ENCODE measurements at regions of chr3 and their contacts with region 1.

Region 1: DNA sequence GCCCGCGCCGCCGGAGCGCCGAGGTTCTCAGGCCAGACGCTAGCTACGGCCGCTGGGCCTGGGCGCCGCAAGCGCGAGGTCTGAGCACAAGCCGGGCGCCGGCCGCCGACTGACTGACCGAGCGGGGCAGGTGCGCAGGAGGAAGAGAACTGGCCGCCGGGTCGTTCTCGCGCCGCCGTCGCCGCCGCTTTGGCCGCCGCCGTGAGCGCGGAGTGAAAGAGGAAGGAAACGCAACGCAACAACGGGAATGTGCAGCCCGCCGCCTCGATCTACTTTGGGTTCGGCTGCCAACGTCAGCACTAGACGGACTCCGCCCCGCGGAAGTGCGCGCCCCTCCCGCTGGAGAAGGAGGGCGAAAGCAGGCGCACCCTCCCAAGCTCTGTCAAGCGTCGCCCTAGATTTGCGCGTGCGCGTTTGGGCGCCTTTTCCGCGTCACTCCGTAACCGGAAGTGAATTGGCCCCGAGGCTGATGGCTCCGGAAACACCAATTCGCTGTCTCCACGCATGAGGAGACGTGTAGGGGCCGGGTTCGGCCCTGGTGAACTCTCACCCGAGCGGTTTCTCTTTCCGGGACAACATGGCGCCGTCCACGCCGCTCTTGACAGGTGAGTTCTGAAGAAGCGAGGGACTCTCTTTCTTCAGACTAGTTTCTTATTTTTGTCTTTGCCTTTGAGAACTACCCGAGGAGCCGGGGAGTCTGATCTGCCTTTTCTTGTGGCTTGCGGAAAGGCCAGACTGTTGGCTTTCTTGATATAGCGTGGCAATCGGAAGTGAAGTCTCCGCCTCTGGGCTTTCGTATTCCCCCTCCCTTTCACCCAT is at the starts of genes EIF2A and SERP1:
- DNase-seq: peak; percentile 97 to 100 (median 100)
- ATAC-seq: peak; percentile 94
- H3K4me3 ChIP-seq: peak within 1 kb of the TSS; percentile 78
- H3K4me3 Mint-ChIP-seq: peak within 1 kb of the TSS; percentile 88 to 99 (median 96)
- H3K27ac ChIP-seq: peak within 1 kb of the TSS; percentile 96
- H3K27ac Mint-ChIP-seq: peak within 1 kb of the TSS; percentile 93 to 100 (median 98)
- H3K4me1 ChIP-seq: peaks cover 15 to 23% of the 10 kb centered on the region in 2 donors
- H3K4me1 Mint-ChIP-seq: peaks cover 34 to 84% (median 79%) of the 10 kb centered on the region in 7 donors
- H3K27me3 ChIP-seq: no peaks in the 10 kb centered on the region
- H3K27me3 Mint-ChIP-seq: no peaks in the 10 kb centered on the region
- total RNA-seq, gene EIF2A: 94.7 to 135 (median 105) TPM
- total RNA-seq, gene SERP1: 89.4 to 120 (median 115) TPM

Region 2: GRCh38 chr3:149969940-149970715 is 576.3 kb before region 1 on chr3:
- CTCF ChIA-PET with region 1: no interaction called
- POLR2A ChIA-PET with region 1: no interaction called
- intact Hi-C with region 1: loop called (anchors 1 kb)
- DNase-seq: peak; percentile 54 to 81 (median 75)
- ATAC-seq: peak; percentile 64
- H3K4me3 ChIP-seq: peak overlapping the region; percentile 53
- H3K4me3 Mint-ChIP-seq: peak overlapping the region; percentile 85 to 96 (median 92)
- H3K27ac ChIP-seq: peak overlapping the region; percentile 63
- H3K27ac Mint-ChIP-seq: peak overlapping the region in 8 of 9 donors; percentile 60 to 94 (median 86)
- H3K4me1 ChIP-seq: peaks cover 0 to 4% of the 10 kb centered on the region in 2 donors
- H3K4me1 Mint-ChIP-seq: peaks cover 16 to 26% (median 20%) of the 10 kb centered on the region in 7 donors
- H3K27me3 ChIP-seq: peaks cover 0 to 5% of the 10 kb centered on the region in 2 donors
- H3K27me3 Mint-ChIP-seq: peaks cover 6 to 55% (median 26%) of the 10 kb centered on the region in 5 donors

Region 3: GRCh38 chr3:150567328-150567727 is 20.9 kb after region 1 on chr3:
- CTCF ChIA-PET with region 1: no interaction called
- POLR2A ChIA-PET with region 1: interaction called, 3 read pairs
- intact Hi-C with region 1: loop called in 1 of 2 experiments (anchors 2 kb)
- DNase-seq: no peak
- ATAC-seq: no peak
- H3K4me3 ChIP-seq: no peak overlapping the region
- H3K4me3 Mint-ChIP-seq: no peak overlapping the region
- H3K27ac ChIP-seq: no peak overlapping the region
- H3K27ac Mint-ChIP-seq: peak overlapping the region in 2 of 9 donors; percentile 5 to 26
- H3K4me1 ChIP-seq: no peaks in the 10 kb centered on the region
- H3K4me1 Mint-ChIP-seq: peaks cover 0 to 4% (median 0%) of the 10 kb centered on the region in 7 donors
- H3K27me3 ChIP-seq: no peaks in the 10 kb centered on the region
- H3K27me3 Mint-ChIP-seq: no peaks in the 10 kb centered on the region

Region 4: GRCh38 chr3:150635526-150635925 is 89.1 kb after region 1 on chr3:
- CTCF ChIA-PET with region 1: no interaction called
- POLR2A ChIA-PET with region 1: interaction called, 13 read pairs
- intact Hi-C with region 1: no loop called
- DNase-seq: peak in 4 of 9 donors; percentile 7 to 19 (median 10)
- ATAC-seq: peak; percentile 83
- H3K4me3 ChIP-seq: no peak overlapping the region
- H3K4me3 Mint-ChIP-seq: peak overlapping the region in 9 of 10 donors; percentile 6 to 64 (median 37)
- H3K27ac ChIP-seq: no peak overlapping the region
- H3K27ac Mint-ChIP-seq: peak overlapping the region in 7 of 9 donors; percentile 12 to 79 (median 41)
- H3K4me1 ChIP-seq: peaks cover 12 to 13% of the 10 kb centered on the region in 2 donors
- H3K4me1 Mint-ChIP-seq: peaks cover 10 to 34% (median 27%) of the 10 kb centered on the region in 7 donors
- H3K27me3 ChIP-seq: no peaks in the 10 kb centered on the region
- H3K27me3 Mint-ChIP-seq: no peaks in the 10 kb centered on the region

Region 5: GRCh38 chr3:150870396-150870795 is 324.0 kb after region 1 on chr3:
- CTCF ChIA-PET with region 1: no interaction called
- POLR2A ChIA-PET with region 1: no interaction called
- intact Hi-C with region 1: loop called in 1 of 2 experiments (anchors 5 kb)
- DNase-seq: no peak
- ATAC-seq: no peak
- H3K4me3 ChIP-seq: no peak overlapping the region
- H3K4me3 Mint-ChIP-seq: no peak overlapping the region
- H3K27ac ChIP-seq: no peak overlapping the region
- H3K27ac Mint-ChIP-seq: no peak overlapping the region
- H3K4me1 ChIP-seq: no peaks in the 10 kb centered on the region
- H3K4me1 Mint-ChIP-seq: peaks cover 0 to 3% (median 0%) of the 10 kb centered on the region in 7 donors
- H3K27me3 ChIP-seq: no peaks in the 10 kb centered on the region
- H3K27me3 Mint-ChIP-seq: peaks cover 4 to 17% (median 12%) of the 10 kb centered on the region in 5 donors

Region 6: GRCh38 chr3:151276687-151277042 is 730.2 kb after region 1 on chr3:
- CTCF ChIA-PET with region 1: no interaction called
- POLR2A ChIA-PET with region 1: no interaction called
- intact Hi-C with region 1: loop called in 1 of 2 experiments (anchors 5 kb)
- DNase-seq: peak in 8 of 9 donors; percentile 12 to 56 (median 25)
- ATAC-seq: peak; percentile 85
- H3K4me3 ChIP-seq: no peak overlapping the region
- H3K4me3 Mint-ChIP-seq: peak overlapping the region; percentile 8 to 76 (median 44)
- H3K27ac ChIP-seq: no peak overlapping the region
- H3K27ac Mint-ChIP-seq: peak overlapping the region; percentile 1 to 93 (median 67)
- H3K4me1 ChIP-seq: peaks cover 20 to 21% of the 10 kb centered on the region in 2 donors
- H3K4me1 Mint-ChIP-seq: peaks cover 21 to 63% (median 43%) of the 10 kb centered on the region in 7 donors
- H3K27me3 ChIP-seq: no peaks in the 10 kb centered on the region
- H3K27me3 Mint-ChIP-seq: no peaks in the 10 kb centered on the region